ENCODE measurements at regions of chr3 and their contacts with region 1.

Region 1: DNA sequence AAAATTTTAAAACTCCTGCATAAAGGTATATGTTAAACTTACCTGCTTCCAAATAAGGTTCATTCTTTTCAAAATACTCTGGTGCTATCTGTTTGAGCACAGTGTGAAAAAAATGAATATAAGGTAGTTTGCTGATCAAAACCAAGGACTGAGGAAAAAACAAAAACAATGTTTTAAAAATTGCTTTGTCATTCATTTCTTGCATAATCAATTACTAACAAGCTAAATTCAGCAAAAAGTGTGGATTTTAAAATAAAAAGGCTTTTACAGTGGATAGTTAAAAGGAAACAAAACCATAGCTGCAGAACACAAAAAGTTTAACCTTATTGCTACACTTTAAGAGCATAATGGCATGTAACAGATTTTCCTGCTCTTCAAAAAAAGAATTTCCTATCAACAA is 31.5 kb downstream of the DENND6A start:
- DNase-seq: no peak
- H3K4me3 ChIP-seq: no peak overlapping the region
- H3K27ac ChIP-seq: no peak overlapping the region
- H3K4me1 ChIP-seq: no peaks in the 10 kb centered on the region
- CTCF ChIP-seq: no peak

Region 2: GRCh38 chr3:57675530-57675929 is 14.1 kb after region 1 on chr3:
- CTCF ChIA-PET with region 1: no interaction called
- POLR2A ChIA-PET with region 1: interaction called, 15 read pairs
- intact Hi-C with region 1: no loop called
- DNase-seq: no peak
- H3K4me3 ChIP-seq: no peak overlapping the region
- H3K27ac ChIP-seq: no peak overlapping the region
- H3K4me1 ChIP-seq: peaks cover 46% of the 10 kb centered on the region
- CTCF ChIP-seq: no peak